Caco-2 (cell line): ENCODE measurements at regions of chr19 and their contacts with region 1.

Region 1: GRCh38 chr19:48842789-48843162 is 6.5 kb upstream of the HSD17B14 start:
- DNase-seq: peak; percentile 67 to 76
- H3K4me3 ChIP-seq: no peak overlapping the region
- H3K4me3 Mint-ChIP-seq: no peak overlapping the region
- H3K27ac Mint-ChIP-seq: peak overlapping the region; percentile 14
- H3K4me1 ChIP-seq: peaks cover 4% of the 10 kb centered on the region; the same call in 1 of the 2 replicates
- H3K4me1 Mint-ChIP-seq: peaks cover 7% of the 10 kb centered on the region
- H3K27me3 ChIP-seq: no peaks in the 10 kb centered on the region
- H3K27me3 Mint-ChIP-seq: no peaks in the 10 kb centered on the region
- CTCF ChIP-seq: peak; percentile 86 to 94

Region 2: DNA sequence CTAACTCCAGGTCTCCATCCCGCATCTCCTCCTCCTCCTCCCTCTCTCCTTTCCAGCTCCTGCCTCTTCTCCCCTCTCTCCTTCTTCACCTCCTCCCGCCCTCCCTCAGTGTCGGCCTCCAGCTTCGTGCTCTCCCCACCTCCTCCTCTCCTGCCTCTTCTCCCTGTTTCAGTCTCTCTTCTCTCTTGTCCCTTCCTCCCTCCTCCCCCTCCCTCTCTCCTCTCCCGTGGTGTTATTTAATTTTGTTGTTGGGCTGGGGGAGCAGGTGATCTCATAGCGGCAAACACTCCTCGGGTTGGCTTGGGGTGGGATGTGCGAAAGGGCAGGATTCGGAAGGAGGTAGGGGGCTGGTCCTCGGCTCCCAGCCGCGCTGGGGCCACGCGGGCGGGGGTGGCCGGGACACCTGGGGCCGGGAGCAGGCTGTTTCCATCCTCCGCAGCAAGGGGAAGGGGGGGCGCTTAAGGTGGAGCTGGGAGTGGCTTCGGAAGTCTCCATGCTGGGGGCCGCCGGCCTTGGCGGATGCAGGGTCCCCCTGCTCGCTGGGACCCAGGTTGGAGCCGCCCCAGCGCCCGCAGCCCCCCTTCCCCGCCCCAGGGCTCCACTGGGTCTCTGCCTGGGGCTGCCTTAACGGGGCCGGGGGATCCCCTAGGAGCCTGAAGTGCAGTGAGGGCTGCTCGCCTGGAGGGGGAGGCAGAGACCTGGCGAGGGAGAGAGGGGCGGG is 196.6 kb before region 1 on chr19 and contains the start of gene CA11:
- CTCF ChIA-PET with region 1: interaction called, 10 read pairs
- POLR2A ChIA-PET with region 1: no interaction called
- intact Hi-C with region 1: no loop called
- DNase-seq: peak; percentile 94 to 95
- H3K4me3 ChIP-seq: peak within 1 kb of the TSS; percentile 56
- H3K4me3 Mint-ChIP-seq: peak within 1 kb of the TSS; percentile 77
- H3K27ac Mint-ChIP-seq: peak within 1 kb of the TSS; percentile 69
- H3K4me1 ChIP-seq: peaks cover 9% of the 10 kb centered on the region; the same call in 1 of the 2 replicates
- H3K4me1 Mint-ChIP-seq: peaks cover 16% of the 10 kb centered on the region
- H3K27me3 ChIP-seq: no peaks in the 10 kb centered on the region
- H3K27me3 Mint-ChIP-seq: no peaks in the 10 kb centered on the region
- CTCF ChIP-seq: peak; percentile 93 to 96
- total RNA-seq, gene CA11: 10.5 and 15.9 TPM in 2 replicates

Region 3: GRCh38 chr19:48720613-48721296 is 122.0 kb before region 1 on chr19:
- CTCF ChIA-PET with region 1: no interaction called
- POLR2A ChIA-PET with region 1: no interaction called
- intact Hi-C with region 1: no loop called
- DNase-seq: peak; percentile 97 to 99
- H3K4me3 ChIP-seq: peak overlapping the region; percentile 79
- H3K4me3 Mint-ChIP-seq: peak overlapping the region; percentile 92
- H3K27ac Mint-ChIP-seq: peak overlapping the region; percentile 97
- H3K4me1 ChIP-seq: peaks cover 6% of the 10 kb centered on the region
- H3K4me1 Mint-ChIP-seq: peaks cover 26% of the 10 kb centered on the region
- H3K27me3 ChIP-seq: no peaks in the 10 kb centered on the region
- H3K27me3 Mint-ChIP-seq: no peaks in the 10 kb centered on the region
- CTCF ChIP-seq: no peak

Region 4: GRCh38 chr19:48760504-48761205 is 82.1 kb before region 1 on chr19:
- CTCF ChIA-PET with region 1: no interaction called
- POLR2A ChIA-PET with region 1: no interaction called
- intact Hi-C with region 1: no loop called
- DNase-seq: no peak
- H3K4me3 ChIP-seq: no peak overlapping the region
- H3K4me3 Mint-ChIP-seq: no peak overlapping the region
- H3K27ac Mint-ChIP-seq: no peak overlapping the region
- H3K4me1 ChIP-seq: peaks cover 10% of the 10 kb centered on the region; the same call in 1 of the 2 replicates
- H3K4me1 Mint-ChIP-seq: no peaks in the 10 kb centered on the region
- H3K27me3 ChIP-seq: no peaks in the 10 kb centered on the region
- H3K27me3 Mint-ChIP-seq: no peaks in the 10 kb centered on the region
- CTCF ChIP-seq: no peak

Region 5: GRCh38 chr19:48812094-48812929 is 30.5 kb before region 1 on chr19:
- CTCF ChIA-PET with region 1: interaction called, 10 read pairs
- POLR2A ChIA-PET with region 1: interaction called, 4 read pairs
- intact Hi-C with region 1: no loop called
- DNase-seq: peak; percentile 89 to 92
- H3K4me3 ChIP-seq: peak overlapping the region; percentile 83
- H3K4me3 Mint-ChIP-seq: peak overlapping the region; percentile 79
- H3K27ac Mint-ChIP-seq: peak overlapping the region; percentile 64
- H3K4me1 ChIP-seq: peaks cover 26% of the 10 kb centered on the region
- H3K4me1 Mint-ChIP-seq: peaks cover 33% of the 10 kb centered on the region
- H3K27me3 ChIP-seq: no peaks in the 10 kb centered on the region
- H3K27me3 Mint-ChIP-seq: no peaks in the 10 kb centered on the region
- CTCF ChIP-seq: no peak

Region 6: DNA sequence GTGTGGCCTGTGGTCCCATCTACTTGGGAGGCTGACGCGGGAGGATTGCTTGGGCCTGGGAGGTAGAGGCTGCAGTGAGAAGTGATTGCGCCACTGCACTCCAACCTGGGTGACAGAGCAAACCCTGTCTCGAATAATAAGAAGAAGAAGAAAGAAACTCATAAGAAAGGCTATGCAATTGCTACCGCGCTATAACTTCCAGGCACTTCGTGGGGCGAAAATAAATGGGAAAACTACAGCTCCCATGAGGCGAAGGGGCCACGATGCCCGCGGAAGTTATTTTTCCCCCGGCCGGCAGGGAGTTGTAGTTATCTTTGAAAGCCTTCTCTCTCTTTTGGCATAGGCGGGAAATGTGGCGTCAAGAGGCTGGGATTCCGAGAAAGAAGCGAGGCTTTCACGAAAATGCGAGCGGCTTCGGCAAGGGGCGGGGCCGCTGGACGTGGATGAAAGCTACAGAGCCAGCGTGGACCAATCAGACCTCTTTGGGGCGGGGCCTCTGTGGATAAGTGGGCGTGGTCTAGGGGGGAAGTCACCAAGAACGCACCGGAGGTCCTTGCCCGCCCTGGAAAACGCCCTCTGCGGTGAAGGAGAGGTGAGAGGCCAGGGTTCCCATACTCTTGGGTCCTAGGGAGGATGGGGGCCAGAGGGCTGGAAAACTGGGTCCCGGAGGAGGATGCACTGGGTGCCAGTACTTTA is 57.2 kb after region 1 on chr19 and contains the start of gene NUCB1:
- CTCF ChIA-PET with region 1: interaction called, 12 read pairs
- POLR2A ChIA-PET with region 1: interaction called, 11 read pairs
- intact Hi-C with region 1: no loop called
- DNase-seq: peak; percentile 100
- H3K4me3 ChIP-seq: peak within 1 kb of the TSS; percentile 76
- H3K4me3 Mint-ChIP-seq: peak within 1 kb of the TSS; percentile 92
- H3K27ac Mint-ChIP-seq: peak within 1 kb of the TSS; percentile 89
- H3K4me1 ChIP-seq: 0 out of 2 replicates have a peak, but pooled peaks cover 13% of the 10 kb centered on the region
- H3K4me1 Mint-ChIP-seq: peaks cover 13% of the 10 kb centered on the region
- H3K27me3 ChIP-seq: no peaks in the 10 kb centered on the region
- H3K27me3 Mint-ChIP-seq: no peaks in the 10 kb centered on the region
- CTCF ChIP-seq: peak in 1 of 2 experiments; percentile 38
- total RNA-seq, gene NUCB1: 140 and 142 TPM in 2 replicates

Region 7: DNA sequence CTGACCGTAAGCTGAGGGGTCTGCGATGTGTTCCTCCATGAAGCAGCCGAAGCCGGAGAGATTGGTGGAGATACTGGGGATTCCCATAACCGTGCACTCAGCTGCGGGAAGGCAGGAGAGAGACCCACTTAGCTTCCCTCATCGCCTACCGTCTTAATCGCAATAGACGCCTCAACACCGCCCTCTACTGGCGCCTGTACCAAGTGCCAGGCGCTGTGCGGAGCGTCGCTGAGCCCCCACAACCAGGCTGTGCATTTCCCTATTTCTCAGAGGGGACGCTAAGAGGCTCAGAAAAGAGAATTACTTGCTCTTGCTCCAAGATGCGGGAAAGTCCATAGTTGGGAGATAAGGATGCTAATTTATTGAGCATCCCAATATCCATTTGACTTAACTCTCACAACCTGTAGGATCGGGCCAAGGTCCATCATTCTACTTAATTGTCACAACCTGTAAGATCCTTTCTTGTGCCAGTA is 128.2 kb after region 1 on chr19:
- CTCF ChIA-PET with region 1: interaction called, 13 read pairs
- POLR2A ChIA-PET with region 1: interaction called, 6 read pairs
- intact Hi-C with region 1: no loop called
- DNase-seq: peak; percentile 73 to 79
- H3K4me3 ChIP-seq: no peak overlapping the region
- H3K4me3 Mint-ChIP-seq: no peak overlapping the region
- H3K27ac Mint-ChIP-seq: no peak overlapping the region
- H3K4me1 ChIP-seq: peaks cover 12% of the 10 kb centered on the region
- H3K4me1 Mint-ChIP-seq: peaks cover 6% of the 10 kb centered on the region
- H3K27me3 ChIP-seq: no peaks in the 10 kb centered on the region
- H3K27me3 Mint-ChIP-seq: no peaks in the 10 kb centered on the region
- CTCF ChIP-seq: peak; percentile 81 to 88

Region 8: DNA sequence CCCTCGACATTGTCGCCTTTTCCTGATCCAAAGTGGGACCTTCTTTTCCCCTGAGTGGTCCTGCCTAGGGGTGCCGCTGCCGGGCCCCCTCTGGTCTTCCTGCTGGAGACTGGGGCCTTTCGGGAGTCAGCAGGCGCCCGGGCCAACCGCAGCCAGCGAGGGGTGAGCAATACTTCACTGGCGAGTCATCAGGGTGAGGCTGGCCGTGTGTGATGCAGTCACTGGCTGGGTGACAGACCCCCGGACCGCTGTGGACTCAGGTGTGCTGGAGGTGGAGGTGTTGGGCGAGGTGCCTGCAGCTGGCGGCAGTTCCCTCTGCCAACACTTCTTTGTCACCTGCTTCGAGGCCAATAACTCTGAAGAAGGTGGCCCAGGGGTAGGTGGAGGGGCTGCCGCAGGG is 199.4 kb after region 1 on chr19:
- CTCF ChIA-PET with region 1: no interaction called
- POLR2A ChIA-PET with region 1: no interaction called
- intact Hi-C with region 1: no loop called
- DNase-seq: no peak
- H3K4me3 ChIP-seq: no peak overlapping the region
- H3K4me3 Mint-ChIP-seq: no peak overlapping the region
- H3K27ac Mint-ChIP-seq: no peak overlapping the region
- H3K4me1 ChIP-seq: no peaks in the 10 kb centered on the region
- H3K4me1 Mint-ChIP-seq: no peaks in the 10 kb centered on the region
- H3K27me3 ChIP-seq: no peaks in the 10 kb centered on the region
- H3K27me3 Mint-ChIP-seq: no peaks in the 10 kb centered on the region
- CTCF ChIP-seq: no peak